Common myeloid progenitor, CD34-positive (primary cell): ENCODE measurements at regions of chr9 and their contacts with region 1.

Region 1: GRCh38 chr9:71768388-71769174 is at the start of gene CEMIP2:
- DNase-seq: peak; percentile 90 to 96 (median 95)
- H3K4me3 ChIP-seq: peak within 1 kb of the TSS; percentile 72 to 98 (median 90)
- H3K27ac ChIP-seq: peak within 1 kb of the TSS; percentile 66 to 77
- H3K4me1 ChIP-seq: peaks cover 22 to 54% (median 41%) of the 10 kb centered on the region in 4 experiments
- H3K27me3 ChIP-seq: no peaks in the 10 kb centered on the region

Region 2: GRCh38 chr9:71333321-71333720 is 435.3 kb before region 1 on chr9:
- CTCF ChIA-PET with region 1: no interaction called
- POLR2A ChIA-PET with region 1: no interaction called
- DNase-seq: no peak
- H3K4me3 ChIP-seq: no peak overlapping the region
- H3K27ac ChIP-seq: no peak overlapping the region
- H3K4me1 ChIP-seq: no peaks in the 10 kb centered on the region
- H3K27me3 ChIP-seq: peaks cover 0 to 9% (median 0%) of the 10 kb centered on the region in 5 experiments

Region 3: DNA sequence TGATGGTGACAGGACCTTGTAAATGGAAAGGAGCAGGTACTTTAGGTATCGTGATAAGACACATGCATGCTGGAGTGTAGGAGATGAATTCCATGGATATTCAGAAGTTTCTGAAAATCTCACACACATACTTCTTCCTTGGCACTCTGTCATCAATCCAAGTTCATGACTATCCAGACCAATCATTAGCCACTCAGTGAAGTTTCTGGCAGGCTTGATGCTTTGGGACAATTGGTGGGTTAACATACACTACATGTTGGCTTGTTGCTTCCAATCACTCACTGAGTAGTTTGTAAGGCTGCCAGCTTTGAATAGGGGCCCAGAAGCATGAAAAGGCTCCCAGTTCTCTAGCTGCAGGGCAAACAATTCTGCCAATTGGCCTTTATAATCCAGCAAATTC is 147.8 kb before region 1 on chr9:
- CTCF ChIA-PET with region 1: no interaction called
- POLR2A ChIA-PET with region 1: no interaction called
- DNase-seq: no peak
- H3K4me3 ChIP-seq: no peak overlapping the region
- H3K27ac ChIP-seq: no peak overlapping the region
- H3K4me1 ChIP-seq: no peaks in the 10 kb centered on the region
- H3K27me3 ChIP-seq: no peaks in the 10 kb centered on the region

Region 4: DNA sequence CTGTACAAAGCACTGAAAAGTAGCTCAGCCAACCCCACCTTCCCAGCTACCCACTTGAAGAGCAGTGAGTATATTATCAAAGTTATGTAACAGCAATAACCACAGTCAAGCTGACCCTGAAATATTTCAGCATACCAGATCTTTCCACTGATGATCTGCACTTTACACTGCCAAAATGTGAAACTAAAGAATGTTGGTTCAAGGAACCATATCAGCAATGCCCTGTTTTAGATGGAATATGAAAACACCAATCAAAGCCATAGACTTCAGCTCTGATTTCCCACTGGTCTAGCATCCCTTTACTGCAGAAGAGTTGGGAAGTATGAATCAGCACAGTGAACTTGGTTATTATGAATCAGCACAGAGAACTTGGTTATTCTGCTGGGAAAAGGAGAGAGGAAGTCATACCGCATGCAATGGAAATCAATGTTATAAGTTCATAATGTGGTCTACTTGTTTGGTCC is 20.3 kb before region 1 on chr9:
- CTCF ChIA-PET with region 1: interaction called, 16 read pairs
- POLR2A ChIA-PET with region 1: interaction called, 8 read pairs
- DNase-seq: peak in 2 of 3 donors; percentile 44 to 55
- H3K4me3 ChIP-seq: no peak overlapping the region
- H3K27ac ChIP-seq: no peak overlapping the region
- H3K4me1 ChIP-seq: peaks cover 13 to 28% (median 18%) of the 10 kb centered on the region in 4 experiments
- H3K27me3 ChIP-seq: no peaks in the 10 kb centered on the region

Region 5: GRCh38 chr9:71812385-71812784 is 43.8 kb after region 1 on chr9:
- CTCF ChIA-PET with region 1: no interaction called
- POLR2A ChIA-PET with region 1: no interaction called
- DNase-seq: no peak
- H3K4me3 ChIP-seq: no peak overlapping the region
- H3K27ac ChIP-seq: no peak overlapping the region
- H3K4me1 ChIP-seq: peaks cover 0 to 5% (median 4%) of the 10 kb centered on the region in 4 experiments
- H3K27me3 ChIP-seq: no peaks in the 10 kb centered on the region